Common myeloid progenitor, CD34-positive (primary cell): ENCODE measurements at regions of chr16 and their contacts with region 1.

Region 1: GRCh38 chr16:68064791-68065365 is 20.3 kb upstream of the NFATC3 start:
- DNase-seq: peak; percentile 55 to 77 (median 67)
- H3K4me3 ChIP-seq: no peak overlapping the region
- H3K27ac ChIP-seq: no peak overlapping the region
- H3K4me1 ChIP-seq: peaks cover 0 to 27% (median 7%) of the 10 kb centered on the region in 4 experiments
- H3K27me3 ChIP-seq: no peaks in the 10 kb centered on the region

Region 2: DNA sequence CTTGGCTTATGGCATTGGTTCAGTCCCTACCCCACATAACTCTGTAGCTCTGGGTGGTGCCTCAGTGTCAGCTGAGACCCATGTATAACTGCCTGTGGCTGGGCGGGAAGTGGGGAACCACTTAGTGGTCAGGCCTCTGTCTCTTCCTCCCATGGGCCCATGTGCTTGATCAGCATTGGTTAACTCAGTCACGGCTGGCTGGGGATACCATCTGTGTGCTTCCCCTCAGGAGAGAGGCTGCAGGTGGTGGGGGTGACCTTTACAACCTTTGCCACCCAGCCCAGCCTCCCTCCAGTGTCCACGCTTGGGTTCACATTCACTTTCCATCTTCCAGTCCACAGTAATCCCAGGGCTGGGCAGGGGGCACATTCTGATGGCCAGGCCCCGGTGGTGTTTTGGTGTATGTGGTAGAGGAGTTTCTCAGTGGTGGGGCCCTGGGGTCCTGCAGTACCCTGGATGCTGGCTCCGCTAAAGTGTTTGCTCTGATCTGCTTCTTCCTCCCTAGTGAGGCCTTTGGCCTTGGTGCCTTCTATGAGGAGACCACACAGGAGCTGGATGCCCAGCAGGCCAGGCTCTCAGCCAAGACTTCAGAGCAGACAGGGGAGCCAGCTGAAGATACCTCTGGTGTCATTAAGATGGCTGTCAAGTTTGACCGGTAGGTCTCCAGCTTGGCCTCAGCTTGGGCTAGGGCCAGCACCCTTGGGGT is 10.1 kb after region 1 on chr16:
- CTCF ChIA-PET with region 1: interaction called, 51 read pairs
- POLR2A ChIA-PET with region 1: no interaction called
- DNase-seq: peak; percentile 63 to 93 (median 93)
- H3K4me3 ChIP-seq: peak overlapping the region in 2 of 7 experiments; percentile 6 to 46
- H3K27ac ChIP-seq: no peak overlapping the region
- H3K4me1 ChIP-seq: peaks cover 9 to 78% (median 53%) of the 10 kb centered on the region in 4 experiments
- H3K27me3 ChIP-seq: no peaks in the 10 kb centered on the region

Region 3: DNA sequence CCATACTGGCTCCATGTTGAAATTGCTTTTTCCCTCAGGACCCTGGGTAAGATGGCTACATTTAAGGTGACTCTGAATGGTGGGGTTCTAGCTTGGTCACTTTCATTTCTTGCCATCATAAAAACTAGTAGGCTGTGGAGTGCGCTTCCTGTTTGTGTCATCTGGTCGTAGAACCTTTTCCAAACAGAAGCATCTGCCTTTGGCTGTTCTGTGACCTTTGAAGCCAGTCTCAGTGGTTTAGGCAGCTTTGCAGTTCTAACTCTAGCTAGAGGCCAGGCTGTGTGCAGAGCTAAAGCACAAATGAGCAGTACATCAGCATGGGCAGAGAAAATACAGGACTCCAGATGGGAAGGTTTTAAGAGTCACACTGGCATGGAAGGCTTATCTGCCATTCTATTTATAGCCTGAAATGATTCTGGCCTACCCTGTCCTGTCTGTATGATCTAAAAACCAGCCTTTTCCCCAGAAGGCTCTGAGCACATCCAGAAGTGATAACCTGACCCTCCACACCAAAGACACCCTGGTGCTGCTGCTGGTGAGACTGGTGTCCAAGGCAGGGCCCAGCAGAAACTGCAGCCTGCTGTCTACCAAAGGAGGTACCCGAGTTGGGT is 162.4 kb after region 1 on chr16:
- CTCF ChIA-PET with region 1: interaction called, 16 read pairs
- POLR2A ChIA-PET with region 1: no interaction called
- DNase-seq: no peak
- H3K4me3 ChIP-seq: peak overlapping the region in 1 of 7 experiments; percentile 9
- H3K27ac ChIP-seq: peak overlapping the region in 1 of 2 experiments; percentile 67
- H3K4me1 ChIP-seq: peaks cover 0 to 27% (median 22%) of the 10 kb centered on the region in 4 experiments
- H3K27me3 ChIP-seq: no peaks in the 10 kb centered on the region